AG04450 (cell line): ENCODE measurements at regions of chr1 and their contacts with region 1.

Region 1: GRCh38 chr1:228093038-228093906 is 9.9 kb downstream of the C1orf35 start:
- DNase-seq: no peak
- H3K4me3 ChIP-seq: no peak overlapping the region
- H3K27ac ChIP-seq: no peak overlapping the region
- H3K27me3 ChIP-seq: no peaks in the 10 kb centered on the region
- CTCF ChIP-seq: no peak

Region 2: GRCh38 chr1:228118040-228118439 is 24.8 kb after region 1 on chr1:
- CTCF ChIA-PET with region 1: no interaction called
- POLR2A ChIA-PET with region 1: no interaction called
- DNase-seq: no peak
- H3K4me3 ChIP-seq: no peak overlapping the region
- H3K27ac ChIP-seq: no peak overlapping the region
- H3K27me3 ChIP-seq: peaks cover 2% of the 10 kb centered on the region
- CTCF ChIP-seq: no peak

Region 3: DNA sequence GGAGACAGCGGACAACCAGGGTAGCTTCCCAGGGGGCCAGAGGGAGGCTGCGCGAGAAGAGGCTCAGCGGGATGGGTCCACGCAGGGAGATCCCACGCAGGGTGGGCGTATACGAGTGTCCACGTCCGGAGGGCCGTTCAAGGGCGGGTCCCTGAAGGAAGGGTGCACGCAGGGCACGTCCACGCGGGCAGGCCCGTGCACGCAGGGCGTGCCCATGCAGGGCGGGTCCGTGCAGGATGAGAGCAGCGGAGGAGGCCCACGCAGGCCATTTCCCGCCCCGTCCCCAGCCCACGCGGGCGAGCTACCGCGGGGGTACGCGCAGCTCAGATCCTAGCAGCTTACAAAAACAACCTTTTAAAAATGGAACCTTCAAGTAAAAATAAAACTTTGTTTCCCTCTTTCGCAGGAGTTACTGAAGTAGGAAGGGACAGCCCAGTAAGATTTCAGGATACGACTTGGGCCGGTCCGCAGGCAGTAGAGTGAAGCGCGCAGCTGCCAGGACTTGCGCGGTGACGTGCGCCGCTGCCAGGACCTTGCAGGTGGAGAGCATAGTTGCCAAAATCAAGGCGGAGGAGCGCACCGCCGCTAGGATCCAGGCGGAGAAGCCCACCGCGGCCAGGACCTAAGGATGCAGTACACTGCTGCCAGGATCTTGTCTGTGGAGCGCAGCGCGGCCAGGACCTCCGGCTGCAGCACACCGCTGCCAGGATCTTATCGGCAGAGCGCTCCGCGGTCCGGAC is 393.5 kb after region 1 on chr1:
- CTCF ChIA-PET with region 1: no interaction called
- POLR2A ChIA-PET with region 1: interaction called, 12 read pairs
- DNase-seq: peak; percentile 60
- H3K4me3 ChIP-seq: peak overlapping the region; percentile 93
- H3K27ac ChIP-seq: peak overlapping the region; percentile 99
- H3K27me3 ChIP-seq: peaks cover 5% of the 10 kb centered on the region
- CTCF ChIP-seq: no peak